Caki2 (cell line): ENCODE measurements at regions of chr10 and their contacts with region 1.

Region 1: GRCh38 chr10:7956481-7956880 is 98.0 kb upstream of the GATA3 start:
- DNase-seq: peak; percentile 24

Region 2: GRCh38 chr10:7773845-7774801 is 182.4 kb before region 1 on chr10:
- in situ Hi-C with region 1: no loop called
- DNase-seq: no peak

Region 3: DNA sequence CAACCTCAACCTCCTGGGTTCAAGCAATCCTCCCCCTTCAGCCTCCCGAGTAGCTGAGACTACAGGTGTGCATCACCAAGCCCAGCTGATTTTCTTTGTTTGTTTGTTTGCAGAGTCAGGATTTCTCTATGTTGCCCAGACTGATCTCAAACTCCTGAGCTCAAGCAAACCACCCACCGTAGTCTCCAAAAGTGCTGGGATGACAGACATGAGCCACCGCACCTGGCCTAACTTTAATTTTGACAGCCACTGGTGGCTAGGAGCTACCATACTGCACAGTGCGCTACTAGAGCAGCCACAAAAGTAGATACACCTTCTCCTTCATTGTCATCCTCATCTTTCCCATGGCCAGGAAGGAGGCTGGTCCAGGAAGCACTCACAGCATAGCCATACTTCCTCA is 66.8 kb after region 1 on chr10:
- in situ Hi-C with region 1: no loop called
- DNase-seq: no peak

Region 4: GRCh38 chr10:8035006-8035640 is 78.6 kb after region 1 on chr10:
- in situ Hi-C with region 1: loop called (anchors 10 kb)
- DNase-seq: no peak